CD8-positive, alpha-beta memory T cell (primary cell): ENCODE measurements at regions of chr14 and their contacts with region 1.

Region 1: GRCh38 chr14:63641473-63642228 is at the start of gene WDR89:
- DNase-seq: peak; percentile 92 to 98 (median 97)
- H3K4me3 ChIP-seq: peak within 1 kb of the TSS; percentile 86
- H3K4me3 Mint-ChIP-seq: peak within 1 kb of the TSS; percentile 82 to 98 (median 86)
- H3K27ac ChIP-seq: peak within 1 kb of the TSS; percentile 95
- H3K27ac Mint-ChIP-seq: peak within 1 kb of the TSS; percentile 89 to 100 (median 94)
- H3K4me1 ChIP-seq: peaks cover 20% of the 10 kb centered on the region
- H3K4me1 Mint-ChIP-seq: peaks cover 31 to 55% (median 40%) of the 10 kb centered on the region in 3 donors
- H3K27me3 ChIP-seq: no peaks in the 10 kb centered on the region
- H3K27me3 Mint-ChIP-seq: peaks cover 0 to 2% of the 10 kb centered on the region in 2 donors
- total RNA-seq, gene WDR89: 28.9 to 30.6 TPM

Region 2: DNA sequence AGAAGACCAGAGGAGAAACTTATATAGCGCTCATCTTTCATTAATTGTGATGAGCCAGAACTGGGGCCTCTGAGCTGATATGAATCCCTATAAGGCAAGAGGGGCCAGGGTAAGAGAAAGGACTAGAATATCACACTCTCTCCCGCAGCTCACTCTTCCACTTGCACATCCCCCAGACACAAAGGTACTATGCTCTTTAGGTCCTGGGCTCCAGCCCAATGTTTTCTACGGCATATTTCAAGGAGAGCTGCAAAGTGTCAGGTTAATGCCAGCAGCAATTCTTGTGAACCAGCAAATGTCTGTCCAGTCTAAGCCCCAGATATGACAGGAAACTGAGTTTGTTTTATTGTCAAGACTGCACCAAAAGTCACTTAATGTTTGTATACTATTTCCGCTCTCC is 127.9 kb before region 1 on chr14:
- CTCF ChIA-PET with region 1: no interaction called
- POLR2A ChIA-PET with region 1: no interaction called
- DNase-seq: no peak
- H3K4me3 ChIP-seq: no peak overlapping the region
- H3K4me3 Mint-ChIP-seq: peak overlapping the region in 1 of 7 donors; percentile 12
- H3K27ac ChIP-seq: no peak overlapping the region
- H3K27ac Mint-ChIP-seq: peak overlapping the region in 7 of 8 donors; percentile 11 to 72 (median 60)
- H3K4me1 ChIP-seq: peaks cover 44% of the 10 kb centered on the region
- H3K4me1 Mint-ChIP-seq: peaks cover 62 to 79% (median 70%) of the 10 kb centered on the region in 3 donors
- H3K27me3 ChIP-seq: no peaks in the 10 kb centered on the region
- H3K27me3 Mint-ChIP-seq: no peaks in the 10 kb centered on the region

Region 3: DNA sequence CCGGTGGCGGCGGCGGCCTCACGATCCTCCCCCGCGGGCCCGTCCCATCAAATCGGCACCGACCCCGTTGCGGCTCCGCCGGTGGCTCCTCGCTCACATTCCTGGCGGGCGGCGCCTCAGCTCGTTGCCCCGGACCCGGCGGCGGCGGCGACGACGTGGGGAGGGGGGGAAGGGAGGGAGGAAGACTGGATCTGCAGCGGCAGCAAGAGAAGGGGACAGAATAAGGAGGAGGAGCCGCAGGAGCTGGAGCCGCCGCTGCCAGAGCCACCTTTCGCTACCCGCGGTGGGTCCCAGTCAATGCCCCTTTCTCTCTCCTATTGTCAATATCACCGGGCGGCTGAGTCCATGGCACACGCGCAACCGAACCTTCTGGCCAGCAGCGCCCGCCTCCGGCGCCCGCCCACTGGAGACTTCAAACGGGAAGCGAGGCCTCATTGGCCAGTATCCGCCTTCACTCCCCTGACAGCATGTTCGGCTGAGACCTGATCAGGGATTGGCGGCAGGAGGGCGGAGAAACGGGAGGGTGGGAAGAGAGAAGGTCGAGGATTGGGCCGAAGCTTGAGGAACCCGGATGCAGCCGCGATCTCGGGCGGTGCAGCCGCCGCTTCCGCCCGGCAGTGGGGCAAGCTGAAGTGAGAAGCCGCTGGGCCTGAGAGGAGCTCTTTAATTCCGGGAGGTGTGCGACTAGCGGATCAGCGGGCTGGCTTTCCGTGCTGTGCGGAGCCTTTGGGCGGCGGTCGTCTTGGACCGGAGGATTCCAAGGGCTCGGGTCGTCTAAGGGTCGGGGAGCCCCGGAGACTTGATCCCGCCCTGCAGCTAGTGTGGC is 98.4 kb before region 1 on chr14 and contains the start of gene PPP2R5E:
- CTCF ChIA-PET with region 1: interaction called, 4 read pairs
- POLR2A ChIA-PET with region 1: interaction called, 22 read pairs
- DNase-seq: peak; percentile 96 to 99 (median 98)
- H3K4me3 ChIP-seq: peak within 1 kb of the TSS; percentile 97
- H3K4me3 Mint-ChIP-seq: peak within 1 kb of the TSS; percentile 91 to 99 (median 97)
- H3K27ac ChIP-seq: peak within 1 kb of the TSS; percentile 92
- H3K27ac Mint-ChIP-seq: peak within 1 kb of the TSS; percentile 81 to 99 (median 95)
- H3K4me1 ChIP-seq: peaks cover 26% of the 10 kb centered on the region
- H3K4me1 Mint-ChIP-seq: peaks cover 33 to 40% (median 38%) of the 10 kb centered on the region in 3 donors
- H3K27me3 ChIP-seq: no peaks in the 10 kb centered on the region
- H3K27me3 Mint-ChIP-seq: no peaks in the 10 kb centered on the region
- total RNA-seq, gene PPP2R5E: 55.0 to 56.5 TPM

Region 4: DNA sequence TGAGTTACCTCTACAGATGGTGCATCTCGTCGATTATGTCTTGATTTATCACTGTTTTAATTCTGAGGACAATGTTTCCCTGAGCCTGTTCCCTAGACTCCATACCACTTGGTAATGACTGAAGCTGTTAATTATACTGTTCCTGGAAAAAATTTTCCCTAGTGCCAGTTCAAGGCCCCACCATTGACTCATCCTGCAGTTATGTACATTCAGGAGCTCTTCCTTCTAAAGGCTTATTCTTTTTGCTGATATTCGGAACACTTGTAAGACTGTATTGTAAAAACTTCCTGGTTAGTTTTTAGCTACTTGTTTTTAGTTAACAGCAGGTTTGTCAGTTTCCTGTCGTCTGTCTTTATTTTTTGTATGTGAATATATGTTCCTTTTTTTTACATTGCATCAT is 68.1 kb before region 1 on chr14:
- CTCF ChIA-PET with region 1: no interaction called
- POLR2A ChIA-PET with region 1: no interaction called
- DNase-seq: no peak
- H3K4me3 ChIP-seq: no peak overlapping the region
- H3K4me3 Mint-ChIP-seq: no peak overlapping the region
- H3K27ac ChIP-seq: no peak overlapping the region
- H3K27ac Mint-ChIP-seq: peak overlapping the region in 1 of 8 donors; percentile 46
- H3K4me1 ChIP-seq: no peaks in the 10 kb centered on the region
- H3K4me1 Mint-ChIP-seq: no peaks in the 10 kb centered on the region
- H3K27me3 ChIP-seq: no peaks in the 10 kb centered on the region
- H3K27me3 Mint-ChIP-seq: peaks cover 2 to 26% of the 10 kb centered on the region in 2 donors

Region 5: DNA sequence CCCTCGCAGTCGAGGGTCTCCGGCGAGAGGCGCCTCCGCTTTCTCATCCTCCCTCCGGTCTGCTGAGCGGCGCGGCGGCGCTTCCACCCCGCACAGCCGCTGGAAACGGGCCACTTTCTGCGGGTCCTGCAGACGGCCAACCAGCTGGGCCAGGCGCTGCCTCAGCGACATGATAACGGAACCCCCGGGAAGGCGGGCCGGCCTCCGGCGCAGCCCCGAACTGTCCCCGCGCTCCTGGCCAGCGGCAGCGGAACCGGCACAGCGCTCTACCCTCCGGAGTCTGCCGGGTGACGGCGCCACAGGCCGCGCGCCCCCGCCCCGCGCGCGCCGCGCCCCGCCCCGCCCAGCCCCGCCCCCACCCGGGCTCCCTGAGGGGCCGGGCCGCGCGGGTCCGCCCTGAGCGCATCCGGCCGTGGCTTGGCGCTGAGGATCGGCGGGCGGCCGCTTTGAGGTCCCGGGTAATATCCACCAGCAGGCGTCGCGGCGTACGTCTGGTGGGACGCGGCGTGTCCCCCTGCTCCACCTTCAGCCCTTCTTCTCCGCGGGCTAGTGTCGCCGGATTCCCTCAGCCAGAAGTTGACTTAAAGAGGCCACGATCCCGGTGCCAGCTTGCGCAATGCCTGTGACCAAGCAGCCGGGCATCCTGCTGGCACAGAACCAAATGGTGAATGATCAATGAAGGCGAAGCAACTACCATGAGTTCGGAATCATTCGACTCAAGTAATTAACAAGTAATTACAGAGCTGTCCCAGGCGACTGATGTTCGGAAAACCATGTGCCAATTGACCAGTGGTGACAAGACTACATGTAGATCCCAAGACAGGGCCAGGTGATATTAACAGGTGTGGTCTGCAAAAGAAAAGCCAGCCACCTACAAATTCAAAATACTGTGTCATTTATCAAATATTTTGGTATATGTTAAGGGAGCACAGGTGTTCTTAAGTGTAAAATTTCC is 86.4 kb after region 1 on chr14 and contains the start of gene SGPP1:
- CTCF ChIA-PET with region 1: interaction called, 14 read pairs
- POLR2A ChIA-PET with region 1: interaction called, 14 read pairs
- DNase-seq: peak; percentile 76 to 89 (median 81)
- H3K4me3 ChIP-seq: peak within 1 kb of the TSS; percentile 96
- H3K4me3 Mint-ChIP-seq: peak within 1 kb of the TSS; percentile 97 to 100 (median 99)
- H3K27ac ChIP-seq: peak within 1 kb of the TSS; percentile 68
- H3K27ac Mint-ChIP-seq: peak within 1 kb of the TSS; percentile 75 to 99 (median 98)
- H3K4me1 ChIP-seq: peaks cover 23% of the 10 kb centered on the region
- H3K4me1 Mint-ChIP-seq: peaks cover 36 to 49% (median 47%) of the 10 kb centered on the region in 3 donors
- H3K27me3 ChIP-seq: no peaks in the 10 kb centered on the region
- H3K27me3 Mint-ChIP-seq: peaks cover 0 to 4% of the 10 kb centered on the region in 2 donors
- total RNA-seq, gene SGPP1: 12.4 to 13.9 TPM

Region 6: GRCh38 chr14:64060648-64061096 is 419.0 kb after region 1 on chr14:
- CTCF ChIA-PET with region 1: no interaction called
- POLR2A ChIA-PET with region 1: no interaction called
- DNase-seq: no peak
- H3K4me3 ChIP-seq: no peak overlapping the region
- H3K4me3 Mint-ChIP-seq: peak overlapping the region in 1 of 7 donors; percentile 65
- H3K27ac ChIP-seq: no peak overlapping the region
- H3K27ac Mint-ChIP-seq: peak overlapping the region in 2 of 8 donors; percentile 38 to 79
- H3K4me1 ChIP-seq: no peaks in the 10 kb centered on the region
- H3K4me1 Mint-ChIP-seq: peaks cover 12 to 25% (median 15%) of the 10 kb centered on the region in 3 donors
- H3K27me3 ChIP-seq: no peaks in the 10 kb centered on the region
- H3K27me3 Mint-ChIP-seq: no peaks in the 10 kb centered on the region